Adrenal gland (tissue), 19 donors: ENCODE measurements at regions of chr4 and their contacts with region 1.

Region 1: GRCh38 chr4:127965062-127965802 is at the starts of genes ABHD18 and MFSD8:
- DNase-seq: peak; percentile 99 to 100 (median 100)
- H3K4me3 ChIP-seq: peak within 1 kb of the TSS; percentile 85 to 91 (median 88)
- H3K27ac ChIP-seq: peak within 1 kb of the TSS; percentile 70 to 98 (median 97)
- H3K4me1 ChIP-seq: peaks cover 6 to 31% of the 10 kb centered on the region in 2 donors
- H3K27me3 ChIP-seq: no peaks in the 10 kb centered on the region
- CTCF ChIP-seq: peak; percentile 23 to 70 (median 62)
- POLR2A ChIP-seq: peak; percentile 56 to 91
- total RNA-seq, gene ABHD18: 4.7 to 25.6 (median 9.4) TPM
- total RNA-seq, gene MFSD8: 2.6 to 74.6 (median 19.1) TPM

Region 2: GRCh38 chr4:127870688-127871087 is 94.5 kb before region 1 on chr4:
- intact Hi-C with region 1: loop called in 1 of 2 experiments (anchors 10 kb)
- DNase-seq: peak; percentile 38 to 82 (median 66)
- H3K4me3 ChIP-seq: no peak overlapping the region
- H3K27ac ChIP-seq: peak overlapping the region in 4 of 5 donors; percentile 8 to 67 (median 40)
- H3K4me1 ChIP-seq: peaks cover 12 to 13% of the 10 kb centered on the region in 2 donors
- H3K27me3 ChIP-seq: no peaks in the 10 kb centered on the region
- CTCF ChIP-seq: no peak
- POLR2A ChIP-seq: peak in 1 of 2 donors; percentile 35

Region 3: GRCh38 chr4:128056796-128057195 is 91.6 kb after region 1 on chr4:
- intact Hi-C with region 1: loop called in 1 of 2 experiments (anchors 10 kb)
- DNase-seq: no peak
- H3K4me3 ChIP-seq: no peak overlapping the region
- H3K27ac ChIP-seq: no peak overlapping the region
- H3K4me1 ChIP-seq: no peaks in the 10 kb centered on the region
- H3K27me3 ChIP-seq: no peaks in the 10 kb centered on the region
- CTCF ChIP-seq: no peak
- POLR2A ChIP-seq: no peak